Activated CD4-positive, alpha-beta memory T cell treated with anti-CD3 and anti-CD28 coated beads for 36 hours (primary cell): ENCODE measurements at regions of chr4 and their contacts with region 1.

Region 1: DNA sequence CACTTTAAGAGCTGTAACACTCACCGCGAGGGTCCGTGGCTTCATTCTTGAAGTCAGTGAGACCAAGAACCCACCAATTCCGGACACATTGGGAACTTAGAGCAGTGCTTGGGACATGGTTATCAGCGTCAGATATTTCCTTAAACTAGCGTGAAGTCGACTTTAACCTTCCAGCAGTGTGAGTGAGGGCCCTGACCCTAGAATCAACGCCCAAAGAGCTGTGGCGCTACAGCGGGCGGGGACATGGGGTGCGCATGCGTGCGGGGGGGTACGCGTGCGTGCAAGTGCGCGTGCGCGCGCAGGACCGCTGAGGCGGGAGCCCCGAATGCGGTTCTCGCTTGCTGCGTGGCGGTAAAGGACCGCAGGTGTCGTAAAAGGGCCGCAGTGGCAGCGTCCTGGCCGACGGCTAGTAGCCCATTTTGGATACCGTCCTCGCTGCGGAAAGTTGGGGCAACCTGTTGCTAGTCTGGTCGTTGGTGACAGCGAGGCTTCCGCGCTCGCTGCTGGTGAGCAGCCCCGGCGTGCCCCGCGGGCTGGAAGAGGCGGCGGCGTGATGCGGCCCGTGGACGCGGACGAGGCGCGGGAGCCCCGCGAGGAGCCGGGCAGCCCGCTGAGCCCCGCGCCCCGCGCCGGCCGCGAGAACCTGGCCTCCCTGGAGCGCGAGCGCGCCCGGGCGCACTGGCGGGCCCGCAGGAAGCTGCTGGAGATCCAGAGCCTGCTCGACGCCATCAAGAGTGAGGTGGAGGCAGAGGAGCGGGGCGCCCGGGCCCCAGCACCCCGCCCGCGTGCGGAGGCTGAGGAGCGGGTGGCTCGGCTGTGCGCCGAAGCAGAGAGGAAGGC is 19.8 kb upstream of the S100P start:
- DNase-seq: peak; percentile 96
- H3K4me3 Mint-ChIP-seq: peak overlapping the region; percentile 95
- H3K27ac Mint-ChIP-seq: peak overlapping the region; percentile 93
- H3K4me1 Mint-ChIP-seq: peaks cover 43% of the 10 kb centered on the region
- H3K27me3 Mint-ChIP-seq: peaks cover 2% of the 10 kb centered on the region

Region 2: GRCh38 chr4:6640292-6641163 is 33.4 kb before region 1 on chr4 and contains the start of gene MRFAP1:
- CTCF ChIA-PET with region 1: interaction called, 6 read pairs
- POLR2A ChIA-PET with region 1: interaction called, 48 read pairs
- intact Hi-C with region 1: loop called (anchors 1 kb)
- DNase-seq: peak; percentile 97
- H3K4me3 Mint-ChIP-seq: peak within 1 kb of the TSS; percentile 100
- H3K27ac Mint-ChIP-seq: peak within 1 kb of the TSS; percentile 99
- H3K4me1 Mint-ChIP-seq: peaks cover 29% of the 10 kb centered on the region
- H3K27me3 Mint-ChIP-seq: no peaks in the 10 kb centered on the region
- total RNA-seq, gene MRFAP1: 122 to 130 TPM

Region 3: DNA sequence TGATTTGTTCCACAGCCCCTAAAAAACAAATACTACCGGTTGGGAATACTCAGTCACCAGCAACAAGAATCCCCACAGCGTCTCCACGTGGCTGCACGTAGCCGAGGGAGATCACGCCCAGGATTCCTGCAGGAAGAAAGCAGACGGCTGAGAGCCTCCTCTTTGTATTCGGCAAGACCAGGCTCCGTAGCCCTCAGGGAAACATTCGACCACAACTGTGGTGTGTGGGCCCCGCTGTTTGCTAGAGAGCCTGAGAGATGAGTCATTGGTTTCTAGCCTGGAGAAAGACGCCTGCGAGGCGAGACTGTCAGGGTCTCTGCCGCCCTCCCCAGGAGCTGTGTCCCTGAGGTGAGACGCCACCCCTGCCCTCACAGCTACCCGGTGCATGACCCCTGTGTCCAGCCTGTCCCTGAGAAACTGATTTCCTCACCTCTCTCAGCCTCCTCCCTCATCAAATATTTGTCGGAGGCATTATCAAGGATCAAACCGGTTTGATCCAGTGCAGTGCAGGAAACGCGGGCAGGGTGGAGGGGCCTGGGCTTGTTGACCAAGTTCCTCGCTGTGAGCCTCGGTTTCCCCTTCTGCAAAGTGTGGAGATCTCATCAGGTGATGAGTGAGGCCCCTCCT is 15.1 kb after region 1 on chr4:
- CTCF ChIA-PET with region 1: interaction called, 138 read pairs
- POLR2A ChIA-PET with region 1: interaction called, 39 read pairs
- intact Hi-C with region 1: loop called (anchors 1 kb)
- DNase-seq: peak; percentile 92
- H3K4me3 Mint-ChIP-seq: peak overlapping the region; percentile 74
- H3K27ac Mint-ChIP-seq: peak overlapping the region; percentile 89
- H3K4me1 Mint-ChIP-seq: peaks cover 77% of the 10 kb centered on the region
- H3K27me3 Mint-ChIP-seq: no peaks in the 10 kb centered on the region

Region 4: DNA sequence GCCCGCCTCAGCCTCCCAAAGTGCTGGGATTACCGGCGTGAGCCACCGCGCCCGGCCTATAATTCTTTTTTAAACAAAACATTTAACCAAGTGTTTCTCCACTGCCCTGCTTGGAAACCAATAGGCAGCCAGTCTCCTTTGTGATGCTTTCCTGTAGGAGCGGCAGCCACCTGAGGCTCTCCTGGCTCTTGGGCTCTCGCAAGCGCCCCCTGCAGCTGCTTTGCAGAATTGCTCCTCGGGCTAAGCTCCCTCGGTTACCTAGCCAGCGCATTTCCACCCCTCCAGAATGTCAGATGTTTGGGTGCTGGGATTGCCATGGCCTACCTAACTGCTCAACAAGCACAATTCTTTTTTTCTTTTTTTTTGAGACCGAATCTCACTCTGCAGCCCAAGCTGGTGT is 27.5 kb after region 1 on chr4:
- CTCF ChIA-PET with region 1: interaction called, 138 read pairs
- POLR2A ChIA-PET with region 1: interaction called, 75 read pairs
- intact Hi-C with region 1: loop called (anchors 1 kb)
- DNase-seq: peak; percentile 70
- H3K4me3 Mint-ChIP-seq: no peak overlapping the region
- H3K27ac Mint-ChIP-seq: no peak overlapping the region
- H3K4me1 Mint-ChIP-seq: peaks cover 73% of the 10 kb centered on the region
- H3K27me3 Mint-ChIP-seq: no peaks in the 10 kb centered on the region

Region 5: GRCh38 chr4:6716018-6716911 is 42.4 kb after region 1 on chr4 and contains the start of gene BLOC1S4:
- CTCF ChIA-PET with region 1: interaction called, 74 read pairs
- POLR2A ChIA-PET with region 1: interaction called, 29 read pairs
- intact Hi-C with region 1: loop called (anchors 1 kb)
- DNase-seq: peak; percentile 92
- H3K4me3 Mint-ChIP-seq: peak within 1 kb of the TSS; percentile 90
- H3K27ac Mint-ChIP-seq: peak within 1 kb of the TSS; percentile 97
- H3K4me1 Mint-ChIP-seq: peaks cover 27% of the 10 kb centered on the region
- H3K27me3 Mint-ChIP-seq: peaks cover 3% of the 10 kb centered on the region
- total RNA-seq, gene BLOC1S4: 17.0 to 19.7 TPM

Region 6: DNA sequence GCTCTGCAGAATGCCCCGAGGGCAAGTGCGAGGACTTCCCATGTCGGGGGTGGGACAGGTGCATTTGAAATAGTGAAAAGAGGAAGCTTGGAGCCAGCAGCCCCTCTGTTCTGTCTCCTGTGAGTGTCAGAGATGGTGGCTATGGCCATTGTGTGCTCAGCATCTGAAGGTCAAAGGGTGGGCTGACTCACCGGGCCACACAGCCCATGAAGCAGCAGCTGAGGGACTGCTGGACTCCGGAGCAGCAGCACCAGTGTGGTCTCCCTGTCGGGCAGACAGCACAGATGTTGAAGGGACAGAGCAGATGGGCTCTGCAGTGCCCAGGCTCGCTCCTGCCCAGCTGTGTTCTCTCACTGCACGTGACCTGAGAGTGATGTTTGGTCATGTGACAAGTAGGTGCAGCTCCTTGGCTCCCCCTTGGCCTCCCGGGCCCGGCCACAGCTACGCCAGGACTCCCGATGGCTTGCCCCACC is 289.3 kb after region 1 on chr4:
- CTCF ChIA-PET with region 1: no interaction called
- POLR2A ChIA-PET with region 1: no interaction called
- intact Hi-C with region 1: no loop called
- DNase-seq: no peak
- H3K4me3 Mint-ChIP-seq: no peak overlapping the region
- H3K27ac Mint-ChIP-seq: no peak overlapping the region
- H3K4me1 Mint-ChIP-seq: peaks cover 43% of the 10 kb centered on the region
- H3K27me3 Mint-ChIP-seq: no peaks in the 10 kb centered on the region